ENCODE measurements at regions of chr1 and their contacts with region 1.

Region 1: DNA sequence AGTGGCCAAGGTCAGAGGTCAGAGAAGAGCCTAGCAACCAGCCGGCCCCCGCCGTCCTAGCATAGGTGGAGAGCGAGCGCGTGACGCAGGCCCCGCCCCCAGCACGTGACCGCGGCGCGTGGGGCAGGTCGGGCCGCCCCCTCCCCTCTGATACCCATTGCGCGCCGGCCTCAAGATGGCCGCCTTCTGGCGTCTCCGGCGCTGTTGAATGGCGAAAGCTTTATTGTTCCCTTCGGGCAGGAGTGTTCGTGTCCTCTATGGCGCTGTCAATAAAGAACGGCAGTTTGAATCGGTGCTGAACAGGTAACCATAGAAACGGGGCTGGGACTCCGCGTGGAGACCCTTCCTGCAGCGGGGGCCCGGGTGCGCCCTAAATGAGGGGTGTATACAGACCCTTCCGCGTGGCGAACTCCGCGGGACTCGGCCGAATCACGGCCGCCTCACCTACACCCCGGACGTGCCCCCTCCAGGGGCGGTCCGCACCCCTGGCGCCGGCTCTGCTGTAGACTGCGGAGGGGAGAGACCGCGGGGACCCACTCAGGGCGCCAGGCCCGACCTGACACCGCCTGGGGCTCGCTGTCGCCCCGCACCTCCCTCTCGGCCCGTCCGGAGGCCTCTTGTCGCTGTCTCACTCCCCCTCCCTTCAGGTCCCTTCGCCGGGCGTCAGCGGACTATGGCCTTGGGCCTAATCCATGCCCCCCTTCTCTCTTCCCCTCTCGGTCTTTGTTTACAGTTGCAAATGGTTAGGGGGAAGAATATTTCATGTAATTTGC is at the start of gene ZBTB40:
- DNase-seq: peak; percentile 96 to 99
- H3K4me3 ChIP-seq: peak within 1 kb of the TSS; percentile 77 to 83
- H3K27ac ChIP-seq: peak within 1 kb of the TSS; percentile 94
- H3K4me1 ChIP-seq: peaks cover 0 to 64% (median 24%) of the 10 kb centered on the region in 4 donors
- H3K27me3 ChIP-seq: no peaks in the 10 kb centered on the region
- CTCF ChIP-seq: peak in 1 of 2 experiments; percentile 4

Region 2: GRCh38 chr1:22171966-22172670 is 279.8 kb before region 1 on chr1:
- intact Hi-C with region 1: no loop called
- DNase-seq: no peak
- H3K4me3 ChIP-seq: no peak overlapping the region
- H3K27ac ChIP-seq: no peak overlapping the region
- H3K4me1 ChIP-seq: no peaks in the 10 kb centered on the region
- H3K27me3 ChIP-seq: peaks cover 0 to 14% of the 10 kb centered on the region in 2 donors
- CTCF ChIP-seq: no peak

Region 3: GRCh38 chr1:22527555-22528296 is 75.8 kb after region 1 on chr1:
- intact Hi-C with region 1: loop called (anchors 10 kb)
- DNase-seq: peak; percentile 11 to 33
- H3K4me3 ChIP-seq: no peak overlapping the region
- H3K27ac ChIP-seq: peak overlapping the region in 1 of 2 donors; percentile 35
- H3K4me1 ChIP-seq: peaks cover 0 to 23% (median 19%) of the 10 kb centered on the region in 4 donors
- H3K27me3 ChIP-seq: no peaks in the 10 kb centered on the region
- CTCF ChIP-seq: no peak